BJ (cell line): ENCODE measurements at regions of chr1 and their contacts with region 1.

Region 1: DNA sequence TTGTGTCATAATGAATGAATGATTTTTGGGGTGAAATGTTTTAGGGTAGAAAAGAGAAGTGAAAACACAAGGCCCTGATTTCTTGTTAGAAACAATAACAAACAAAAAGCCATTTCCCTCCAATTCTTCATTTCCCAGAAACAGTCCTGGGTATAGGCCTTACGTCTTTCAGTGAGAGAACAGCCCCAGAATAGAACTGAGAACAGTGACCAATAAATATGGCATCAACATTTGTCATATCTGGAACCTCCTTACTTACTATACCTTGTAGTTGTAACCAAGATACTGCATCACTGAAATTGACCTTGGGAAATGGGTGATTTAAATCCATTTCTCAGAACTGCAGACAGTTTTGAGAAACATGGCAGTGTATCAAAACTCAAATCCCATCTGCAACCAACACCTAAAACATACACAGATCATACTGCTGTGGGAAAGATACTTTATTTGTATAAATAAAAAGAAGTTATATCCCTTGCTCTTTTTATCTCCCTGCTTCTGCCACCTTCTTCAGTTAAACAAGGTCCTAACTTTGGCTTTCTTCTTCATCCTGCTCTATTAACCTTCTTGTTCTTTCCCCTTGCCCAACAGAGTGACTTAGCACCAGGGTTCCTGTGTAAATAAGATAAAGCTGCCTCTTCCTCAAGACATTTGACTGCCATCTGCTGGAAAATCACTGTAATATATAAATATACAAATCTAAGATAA is 19.5 kb downstream of the XKR8 start:
- DNase-seq: no peak
- H3K4me3 ChIP-seq: no peak overlapping the region
- H3K27me3 ChIP-seq: no peaks in the 10 kb centered on the region
- CTCF ChIP-seq: peak; percentile 55

Region 2: DNA sequence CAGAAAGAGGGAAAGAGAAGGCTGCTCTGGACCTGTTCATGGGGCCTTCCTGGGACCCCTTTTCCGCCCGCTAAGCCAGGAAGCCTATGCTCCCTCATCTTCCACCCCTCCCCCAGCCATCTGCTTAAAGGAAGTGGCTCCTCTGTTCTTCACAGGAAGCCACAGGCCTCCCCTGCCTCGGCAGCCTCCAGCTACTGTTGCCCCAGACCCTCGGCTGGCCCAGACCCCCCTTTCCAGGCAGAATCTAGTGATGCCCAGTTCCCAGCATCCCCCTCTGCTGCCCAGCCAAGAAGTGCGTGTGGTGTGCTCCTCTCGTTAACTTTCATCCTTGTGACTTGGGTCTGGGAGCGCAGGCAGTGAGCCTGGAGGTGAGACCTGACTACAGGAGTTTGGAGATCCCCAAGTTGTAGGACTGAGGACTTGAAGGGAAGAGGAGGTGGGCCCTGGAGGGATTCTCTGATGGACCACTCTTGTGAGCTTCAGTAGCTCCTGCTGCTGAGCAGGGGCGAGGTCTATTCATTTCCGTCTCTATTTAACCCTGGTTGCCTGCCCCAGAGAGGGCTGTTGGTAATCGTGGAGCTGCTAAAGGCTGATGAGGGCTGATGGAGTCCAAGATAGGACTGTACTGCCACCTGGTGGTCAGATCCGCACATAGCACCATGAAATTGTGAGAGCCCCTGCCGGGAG is 316.5 kb before region 1 on chr1:
- CTCF ChIA-PET with region 1: no interaction called
- POLR2A ChIA-PET with region 1: no interaction called
- DNase-seq: no peak
- H3K4me3 ChIP-seq: no peak overlapping the region
- H3K27me3 ChIP-seq: no peaks in the 10 kb centered on the region
- CTCF ChIP-seq: peak; percentile 86

Region 3: GRCh38 chr1:27858072-27858958 is 121.0 kb before region 1 on chr1:
- CTCF ChIA-PET with region 1: interaction called, 81 read pairs
- POLR2A ChIA-PET with region 1: no interaction called
- DNase-seq: peak; percentile 24
- H3K4me3 ChIP-seq: no peak overlapping the region
- H3K27me3 ChIP-seq: no peaks in the 10 kb centered on the region
- CTCF ChIP-seq: peak; percentile 98

Region 4: GRCh38 chr1:27940297-27940696 is 39.0 kb before region 1 on chr1:
- CTCF ChIA-PET with region 1: interaction called, 13 read pairs
- POLR2A ChIA-PET with region 1: no interaction called
- DNase-seq: no peak
- H3K4me3 ChIP-seq: no peak overlapping the region
- H3K27me3 ChIP-seq: peaks cover 3% of the 10 kb centered on the region; the same call in 1 of the 2 replicates
- CTCF ChIP-seq: peak; percentile 37

Region 5: DNA sequence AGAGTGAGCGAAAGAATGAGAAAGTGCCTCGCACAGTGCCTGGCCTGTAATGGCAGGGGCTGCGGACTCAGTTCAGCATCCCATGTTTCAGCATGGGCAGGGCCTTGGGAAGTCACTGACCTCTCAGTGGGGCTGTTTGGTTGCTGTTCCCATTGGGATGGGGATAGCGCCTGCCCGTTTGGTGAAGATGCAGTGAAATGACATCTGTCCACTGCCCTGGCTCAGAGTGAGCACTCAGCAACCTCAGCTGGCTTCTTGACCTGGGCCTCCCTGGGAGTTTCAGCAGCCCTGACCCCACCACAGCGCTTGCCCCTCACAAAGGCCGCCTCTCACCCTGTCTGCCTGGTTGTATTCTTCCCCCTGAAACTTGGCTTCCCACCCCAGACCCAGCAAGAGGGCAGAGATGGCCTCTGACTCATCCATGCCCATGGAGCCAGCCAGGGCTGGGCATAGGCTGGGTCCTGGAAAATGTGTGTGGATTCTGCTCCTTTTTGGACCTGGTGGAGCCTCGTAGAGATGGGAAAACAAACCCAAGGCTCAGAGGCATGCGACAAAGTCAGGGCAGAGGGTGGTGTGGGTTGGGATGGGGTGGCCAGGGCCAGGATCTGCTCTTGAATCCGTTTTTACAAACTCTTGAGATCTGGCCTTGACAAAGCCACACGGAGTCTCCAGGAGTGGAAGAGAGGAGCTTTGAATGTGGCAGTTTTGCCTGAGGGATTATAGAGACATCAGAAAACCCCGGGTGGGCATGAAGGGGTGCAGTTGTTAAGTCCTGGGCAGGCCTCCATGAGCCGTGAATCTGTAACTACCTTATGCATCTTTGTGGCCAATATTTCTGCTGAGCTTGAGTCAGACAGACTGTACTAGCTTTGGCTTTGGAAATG is 18.3 kb before region 1 on chr1:
- CTCF ChIA-PET with region 1: interaction called, 10 read pairs
- POLR2A ChIA-PET with region 1: no interaction called
- DNase-seq: no peak
- H3K4me3 ChIP-seq: peak overlapping the region; percentile 66
- H3K27me3 ChIP-seq: no peaks in the 10 kb centered on the region
- CTCF ChIP-seq: no peak

Region 6: GRCh38 chr1:27968694-27969093 is 10.6 kb before region 1 on chr1:
- CTCF ChIA-PET with region 1: interaction called, 13 read pairs
- POLR2A ChIA-PET with region 1: no interaction called
- DNase-seq: peak; percentile 92
- H3K4me3 ChIP-seq: no peak overlapping the region
- H3K27me3 ChIP-seq: no peaks in the 10 kb centered on the region
- CTCF ChIP-seq: no peak

Region 7: GRCh38 chr1:27992276-27992675 is 13.0 kb after region 1 on chr1:
- CTCF ChIA-PET with region 1: interaction called, 10 read pairs
- POLR2A ChIA-PET with region 1: no interaction called
- DNase-seq: no peak
- H3K4me3 ChIP-seq: no peak overlapping the region
- H3K27me3 ChIP-seq: no peaks in the 10 kb centered on the region
- CTCF ChIP-seq: no peak

Region 8: GRCh38 chr1:28668191-28668955 is 689.1 kb after region 1 on chr1 and contains the start of gene GMEB1:
- CTCF ChIA-PET with region 1: no interaction called
- POLR2A ChIA-PET with region 1: no interaction called
- DNase-seq: no peak
- H3K4me3 ChIP-seq: peak within 1 kb of the TSS; percentile 88
- H3K27me3 ChIP-seq: no peaks in the 10 kb centered on the region
- CTCF ChIP-seq: no peak
- polyA plus RNA-seq, gene GMEB1: 5.0 and 6.6 TPM in 2 replicates